WTC11 (cell line): ENCODE measurements at regions of chr1 and their contacts with region 1.

Region 1: DNA sequence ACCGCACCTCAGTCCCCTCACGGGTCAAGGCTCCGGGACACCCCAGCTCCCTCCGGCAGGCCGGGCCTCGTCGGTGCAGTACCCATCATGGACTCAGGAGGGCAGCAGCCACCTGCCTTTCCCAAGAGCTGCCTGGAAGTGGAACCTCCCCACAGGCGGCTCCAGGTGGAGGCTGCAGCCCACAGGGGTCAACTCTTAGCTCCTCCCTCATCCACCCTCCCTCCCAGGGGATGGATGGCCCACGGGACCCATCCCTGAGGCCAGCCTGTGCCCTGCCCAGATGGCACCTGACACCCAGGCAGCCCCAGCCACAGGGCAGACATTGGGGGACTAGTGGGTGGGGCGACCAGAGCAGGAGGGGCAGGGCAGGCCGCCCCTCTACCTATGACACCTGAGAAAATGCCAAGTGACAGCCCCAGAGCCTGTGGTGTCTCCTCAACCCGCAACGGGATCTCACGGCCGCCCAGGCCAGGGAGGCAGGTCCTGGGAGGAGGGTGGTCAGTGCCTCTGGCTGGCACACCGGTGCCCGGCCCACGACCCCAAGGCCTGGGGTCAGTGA is 1.2 kb upstream of the ARHGEF16 start:
- DNase-seq: peak; percentile 92
- ATAC-seq: peak; percentile 63
- H3K4me3 Mint-ChIP-seq: peak overlapping the region; percentile 49
- H3K27ac Mint-ChIP-seq: peak overlapping the region; percentile 70; the same call in 1 of the 2 replicates
- H3K4me1 Mint-ChIP-seq: peaks cover 9% of the 10 kb centered on the region
- H3K27me3 Mint-ChIP-seq: no peaks in the 10 kb centered on the region; the same call in 1 of the 2 replicates
- CTCF ChIP-seq: peak; percentile 78

Region 2: DNA sequence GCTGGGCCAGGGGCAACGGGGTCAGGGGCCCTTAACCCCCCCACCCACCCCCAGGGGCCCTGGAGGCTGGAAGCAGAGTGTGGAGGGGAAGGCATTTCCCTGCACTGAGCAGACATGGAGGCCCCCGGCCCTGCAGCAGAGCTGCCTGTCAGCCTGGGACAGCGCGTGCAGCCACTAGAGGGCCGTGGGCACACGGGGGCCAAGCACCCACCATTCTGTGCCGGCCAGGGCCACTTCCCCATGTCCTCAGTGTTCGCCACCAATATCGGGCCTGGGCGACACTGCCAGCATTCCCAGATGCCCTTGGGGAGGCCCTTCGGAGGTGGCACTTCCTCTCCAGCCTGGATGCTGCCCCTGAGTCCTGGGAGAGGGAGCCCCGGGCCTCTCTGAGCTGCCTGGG is 22.0 kb before region 1 on chr1:
- CTCF ChIA-PET with region 1: interaction called, 22 read pairs
- POLR2A ChIA-PET with region 1: no interaction called
- DNase-seq: peak; percentile 55
- ATAC-seq: peak; percentile 91
- H3K4me3 Mint-ChIP-seq: no peak overlapping the region
- H3K27ac Mint-ChIP-seq: no peak overlapping the region
- H3K4me1 Mint-ChIP-seq: peaks cover 3% of the 10 kb centered on the region; the same call in 1 of the 2 replicates
- H3K27me3 Mint-ChIP-seq: no peaks in the 10 kb centered on the region
- CTCF ChIP-seq: no peak

Region 3: DNA sequence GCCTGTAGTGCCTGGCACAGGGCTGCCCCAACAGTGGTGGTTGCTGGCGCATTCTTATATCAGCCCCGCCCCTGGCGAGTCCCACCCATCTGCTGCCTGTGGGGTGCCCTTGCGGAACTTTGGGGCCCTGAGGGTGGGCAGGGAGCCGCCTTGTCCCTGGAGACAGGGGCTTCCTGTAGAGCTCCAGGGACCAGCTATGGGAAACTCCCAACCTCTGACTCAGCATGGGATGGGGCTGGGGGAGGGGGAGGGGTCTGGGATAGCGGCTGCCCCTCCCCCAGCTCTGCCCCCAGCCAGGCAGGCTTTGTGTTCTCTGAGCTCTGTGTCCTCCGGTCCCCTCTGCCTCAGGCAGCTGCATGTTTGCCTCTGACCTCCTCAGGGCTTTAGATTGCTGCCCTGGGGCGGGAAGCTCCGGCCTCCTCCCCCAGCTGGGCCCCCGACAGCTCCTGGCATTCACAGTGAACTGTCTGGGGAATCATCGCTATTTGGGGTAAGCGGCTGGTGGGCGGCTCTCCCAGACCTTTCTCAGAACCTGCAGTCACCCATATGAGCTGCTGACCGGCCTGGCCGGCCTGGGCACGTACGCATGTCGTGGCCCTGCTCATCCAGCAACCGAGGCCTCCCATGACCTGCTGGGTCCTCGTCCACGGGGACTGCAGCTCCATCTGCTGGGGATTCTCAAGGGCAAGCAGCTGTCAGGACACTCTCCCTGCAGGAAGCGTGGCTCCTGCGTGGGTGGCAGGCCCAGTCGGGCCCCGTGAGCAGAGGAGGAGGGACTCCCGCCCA is 18.2 kb after region 1 on chr1:
- CTCF ChIA-PET with region 1: interaction called, 165 read pairs
- POLR2A ChIA-PET with region 1: interaction called, 11 read pairs
- DNase-seq: peak; percentile 77
- ATAC-seq: peak; percentile 82
- H3K4me3 Mint-ChIP-seq: no peak overlapping the region
- H3K27ac Mint-ChIP-seq: peak overlapping the region; percentile 70; the same call in 1 of the 2 replicates
- H3K4me1 Mint-ChIP-seq: peaks cover 17% of the 10 kb centered on the region
- H3K27me3 Mint-ChIP-seq: no peaks in the 10 kb centered on the region
- CTCF ChIP-seq: no peak

Region 4: GRCh38 chr1:3483801-3484444 is 30.6 kb after region 1 on chr1:
- CTCF ChIA-PET with region 1: interaction called, 84 read pairs
- POLR2A ChIA-PET with region 1: interaction called, 3 read pairs
- DNase-seq: peak; percentile 88
- ATAC-seq: peak; percentile 86
- H3K4me3 Mint-ChIP-seq: no peak overlapping the region
- H3K27ac Mint-ChIP-seq: peak overlapping the region; percentile 86
- H3K4me1 Mint-ChIP-seq: peaks cover 3% of the 10 kb centered on the region
- H3K27me3 Mint-ChIP-seq: peaks cover 3% of the 10 kb centered on the region
- CTCF ChIP-seq: peak; percentile 53; the same call in 1 of the 2 replicates

Region 5: DNA sequence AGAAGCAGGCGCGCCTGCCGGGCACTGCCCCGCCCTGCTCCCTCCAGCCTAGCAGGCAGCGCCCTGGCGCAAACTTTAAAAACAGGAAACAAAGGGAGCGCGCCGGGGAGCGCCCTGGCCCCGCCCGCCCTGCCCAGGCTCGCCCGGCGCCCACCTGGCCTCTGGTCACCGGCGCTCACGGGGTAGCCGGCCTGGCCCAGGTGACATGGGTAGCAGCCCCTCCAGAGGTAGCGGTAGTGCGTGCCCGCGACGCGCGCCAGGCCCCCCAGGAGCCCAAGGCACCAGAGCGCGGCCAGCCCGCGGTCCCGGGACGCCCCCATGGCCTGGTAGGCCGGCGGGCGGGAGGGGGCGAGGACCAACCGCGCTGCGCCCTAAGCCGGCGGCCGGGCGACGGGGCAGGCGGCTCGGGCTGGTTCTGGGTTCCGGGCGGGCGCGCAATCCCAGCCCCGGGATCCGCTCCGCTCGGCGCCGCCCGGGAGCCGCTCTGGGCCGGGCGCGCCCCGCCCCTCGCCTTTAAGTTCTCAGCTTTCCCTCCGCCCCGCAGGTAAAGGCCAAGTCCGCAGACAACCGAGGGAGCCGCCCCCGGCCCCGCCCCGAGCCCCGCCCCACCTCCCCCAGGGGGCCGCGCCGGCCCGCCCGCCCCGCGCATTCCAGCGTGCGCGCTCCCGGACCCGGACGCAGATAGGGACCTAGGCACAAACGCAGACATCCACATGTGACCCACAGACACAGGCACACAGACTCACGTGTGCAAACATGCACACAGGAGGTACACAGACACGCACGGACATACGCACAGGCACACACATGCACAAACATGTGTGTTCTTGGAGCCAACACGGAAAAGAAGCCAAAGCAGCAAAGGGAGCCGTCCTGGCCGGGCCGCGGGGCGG is 77.9 kb after region 1 on chr1:
- CTCF ChIA-PET with region 1: interaction called, 37 read pairs
- POLR2A ChIA-PET with region 1: no interaction called
- DNase-seq: peak; percentile 88
- ATAC-seq: peak; percentile 89
- H3K4me3 Mint-ChIP-seq: peak overlapping the region; percentile 88
- H3K27ac Mint-ChIP-seq: peak overlapping the region; percentile 99
- H3K4me1 Mint-ChIP-seq: peaks cover 10% of the 10 kb centered on the region
- H3K27me3 Mint-ChIP-seq: peaks cover 24% of the 10 kb centered on the region
- CTCF ChIP-seq: no peak

Region 6: DNA sequence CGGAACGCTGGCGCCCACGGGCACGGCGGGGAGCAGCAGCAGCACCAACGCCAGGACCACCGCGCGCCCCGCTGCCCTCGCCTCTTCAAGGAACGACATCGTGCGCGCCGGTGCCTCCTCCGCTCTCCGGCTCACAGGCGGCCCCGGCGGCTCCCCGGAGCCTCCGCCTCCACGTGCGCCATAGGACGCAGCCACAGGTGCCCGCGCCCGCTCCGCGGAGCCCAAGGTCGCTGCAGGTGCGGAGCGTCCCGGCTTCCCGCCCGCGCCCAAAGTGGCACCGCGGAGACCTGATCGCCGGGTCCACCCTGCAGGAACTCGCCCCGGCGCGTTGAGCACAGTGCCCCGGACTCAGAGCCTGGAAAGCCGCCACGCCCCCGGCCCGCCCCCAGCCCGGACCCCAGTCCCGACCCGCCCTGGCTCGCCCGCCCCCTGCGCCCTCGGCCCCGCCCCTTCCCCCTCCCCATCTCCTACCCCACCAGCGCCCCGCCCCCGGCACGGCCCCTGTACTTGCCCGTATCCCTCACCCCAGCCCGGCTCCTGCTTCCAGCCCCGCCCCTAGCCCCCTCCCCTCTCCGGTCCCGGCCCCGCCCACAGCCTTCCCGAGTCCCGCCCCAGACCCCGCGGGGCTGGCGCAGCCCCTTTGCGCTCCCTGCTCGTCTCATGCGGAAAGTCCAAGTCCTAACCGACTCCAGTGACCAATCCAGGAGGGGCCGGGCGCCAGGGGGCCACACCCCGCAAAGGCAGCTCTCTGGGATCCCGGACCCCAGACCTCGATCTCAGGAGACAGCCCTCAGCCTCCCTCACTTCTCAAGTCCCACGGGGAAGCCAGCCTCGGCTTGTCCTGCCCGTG is 158.1 kb after region 1 on chr1 and contains the start of gene MEGF6:
- CTCF ChIA-PET with region 1: interaction called, 15 read pairs
- POLR2A ChIA-PET with region 1: no interaction called
- DNase-seq: peak; percentile 97
- ATAC-seq: peak; percentile 82
- H3K4me3 Mint-ChIP-seq: peak within 1 kb of the TSS; percentile 80
- H3K27ac Mint-ChIP-seq: no peak within 1 kb of the TSS
- H3K4me1 Mint-ChIP-seq: peaks cover 36% of the 10 kb centered on the region
- H3K27me3 Mint-ChIP-seq: peaks cover 18% of the 10 kb centered on the region
- CTCF ChIP-seq: no peak
- total RNA-seq, gene MEGF6: 24.9 to 32.4 TPM (median 27.2 TPM) in 3 replicates